Endothelial cell of umbilical vein (primary cell): ENCODE measurements at regions of chr4 and their contacts with region 1.

Region 1: DNA sequence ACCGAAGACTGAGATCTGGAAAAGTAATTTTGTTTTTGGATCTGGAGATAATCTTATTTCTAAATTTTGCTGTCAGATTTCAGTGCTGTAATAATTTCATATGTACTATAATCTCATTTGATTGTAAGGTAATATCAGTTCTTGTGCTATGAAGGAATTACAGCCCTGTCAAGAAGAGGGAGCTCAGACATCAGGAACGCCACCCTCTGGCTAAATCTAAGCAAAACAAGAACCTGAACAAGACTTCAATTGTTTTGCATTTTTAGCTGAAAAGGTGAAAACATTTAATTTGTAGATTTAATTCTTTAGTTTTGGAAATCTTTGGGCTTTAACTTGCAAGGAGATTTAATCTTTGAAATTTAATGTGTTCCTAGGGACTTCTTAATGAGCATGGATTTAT is 525.4 kb upstream of the HS3ST1 start:
- DNase-seq: peak; percentile 79
- H3K4me3 ChIP-seq: no peak overlapping the region
- H3K27ac ChIP-seq: no peak overlapping the region
- H3K4me1 ChIP-seq: no peaks in the 10 kb centered on the region
- H3K27me3 ChIP-seq: no peaks in the 10 kb centered on the region
- CTCF ChIP-seq: peak; percentile 32 to 50
- POLR2A ChIP-seq: no peak

Region 2: DNA sequence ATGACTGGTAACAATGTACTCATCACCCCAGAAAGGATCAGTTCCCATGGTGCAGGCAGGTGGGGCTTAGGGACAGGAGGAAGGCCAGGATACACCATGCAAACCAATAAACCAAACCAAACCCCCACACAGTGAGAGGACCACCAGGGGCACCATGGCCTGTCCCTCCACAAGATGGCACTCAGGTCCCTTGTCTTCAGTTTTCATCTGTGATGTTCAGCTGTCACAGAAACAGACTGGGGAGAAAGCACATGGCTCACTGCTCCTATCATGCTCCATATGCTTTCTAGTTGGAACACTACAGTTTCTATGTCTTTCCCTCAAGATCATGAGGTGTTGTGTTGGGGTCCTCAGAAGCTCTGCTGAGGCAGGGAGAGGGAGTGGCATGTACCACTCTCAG is 535.5 kb before region 1 on chr4:
- CTCF ChIA-PET with region 1: interaction called, 3 read pairs
- POLR2A ChIA-PET with region 1: no interaction called
- dilution Hi-C with region 1: no loop called
- intact Hi-C with region 1: loop called (anchors 1 kb)
- DNase-seq: peak; percentile 21
- H3K4me3 ChIP-seq: no peak overlapping the region
- H3K27ac ChIP-seq: no peak overlapping the region
- H3K4me1 ChIP-seq: no peaks in the 10 kb centered on the region
- H3K27me3 ChIP-seq: no peaks in the 10 kb centered on the region
- CTCF ChIP-seq: peak; percentile 40 to 55
- POLR2A ChIP-seq: no peak

Region 3: GRCh38 chr4:11514779-11515419 is 439.2 kb before region 1 on chr4:
- CTCF ChIA-PET with region 1: no interaction called
- POLR2A ChIA-PET with region 1: no interaction called
- dilution Hi-C with region 1: no loop called
- intact Hi-C with region 1: no loop called
- DNase-seq: peak; percentile 60
- H3K4me3 ChIP-seq: no peak overlapping the region
- H3K27ac ChIP-seq: peak overlapping the region; percentile 2
- H3K4me1 ChIP-seq: peaks cover 8% of the 10 kb centered on the region
- H3K27me3 ChIP-seq: no peaks in the 10 kb centered on the region
- CTCF ChIP-seq: no peak
- POLR2A ChIP-seq: no peak

Region 4: DNA sequence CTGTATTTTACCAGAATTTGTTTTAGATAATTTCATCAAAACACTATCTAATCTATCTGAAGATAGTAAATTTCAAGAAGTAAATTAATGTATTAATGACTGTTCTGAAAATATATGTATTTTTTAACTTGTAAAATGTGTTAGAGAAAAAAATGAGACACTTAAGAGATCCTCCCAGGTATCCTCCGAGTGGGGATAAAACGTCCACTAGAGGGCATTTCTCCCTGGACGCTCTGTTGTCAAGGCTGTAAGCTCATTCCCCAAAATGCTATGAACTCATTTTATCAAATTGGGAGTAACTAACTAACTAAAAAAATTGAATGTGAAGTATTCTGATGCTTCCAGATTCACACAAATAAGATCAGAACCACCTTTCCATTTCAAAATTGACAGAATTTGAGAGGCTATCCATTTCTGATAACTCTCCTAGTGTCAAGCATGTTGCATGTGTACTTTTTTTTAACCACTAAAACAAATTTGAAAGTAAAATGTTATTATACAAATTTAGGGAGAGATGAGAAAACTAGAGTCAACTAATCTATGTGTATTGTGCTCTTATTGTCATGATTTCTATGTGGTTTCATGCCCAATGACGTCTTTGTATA is 188.1 kb before region 1 on chr4:
- CTCF ChIA-PET with region 1: interaction called, 54 read pairs
- POLR2A ChIA-PET with region 1: no interaction called
- dilution Hi-C with region 1: no loop called
- intact Hi-C with region 1: loop called (anchors 1 kb)
- DNase-seq: peak; percentile 75
- H3K4me3 ChIP-seq: no peak overlapping the region
- H3K27ac ChIP-seq: no peak overlapping the region
- H3K4me1 ChIP-seq: no peaks in the 10 kb centered on the region
- H3K27me3 ChIP-seq: no peaks in the 10 kb centered on the region
- CTCF ChIP-seq: peak; percentile 61 to 70
- POLR2A ChIP-seq: no peak

Region 5: GRCh38 chr4:11805842-11806241 is 148.3 kb before region 1 on chr4:
- CTCF ChIA-PET with region 1: interaction called, 55 read pairs
- POLR2A ChIA-PET with region 1: no interaction called
- dilution Hi-C with region 1: no loop called
- intact Hi-C with region 1: loop called (anchors 1 kb)
- DNase-seq: peak; percentile 81
- H3K4me3 ChIP-seq: no peak overlapping the region
- H3K27ac ChIP-seq: peak overlapping the region; percentile 45
- H3K4me1 ChIP-seq: peaks cover 21% of the 10 kb centered on the region
- H3K27me3 ChIP-seq: no peaks in the 10 kb centered on the region
- CTCF ChIP-seq: peak; percentile 58 to 65
- POLR2A ChIP-seq: no peak

Region 6: GRCh38 chr4:11912886-11913285 is 41.2 kb before region 1 on chr4:
- CTCF ChIA-PET with region 1: interaction called, 18 read pairs
- POLR2A ChIA-PET with region 1: no interaction called
- dilution Hi-C with region 1: no loop called
- intact Hi-C with region 1: no loop called
- DNase-seq: peak; percentile 40
- H3K4me3 ChIP-seq: no peak overlapping the region
- H3K27ac ChIP-seq: no peak overlapping the region
- H3K4me1 ChIP-seq: peaks cover 10% of the 10 kb centered on the region
- H3K27me3 ChIP-seq: no peaks in the 10 kb centered on the region
- CTCF ChIP-seq: no peak
- POLR2A ChIP-seq: no peak

Region 7: GRCh38 chr4:11937941-11938340 is 16.2 kb before region 1 on chr4:
- CTCF ChIA-PET with region 1: interaction called, 22 read pairs
- POLR2A ChIA-PET with region 1: interaction called, 3 read pairs
- dilution Hi-C with region 1: no loop called
- intact Hi-C with region 1: no loop called
- DNase-seq: no peak
- H3K4me3 ChIP-seq: no peak overlapping the region
- H3K27ac ChIP-seq: no peak overlapping the region
- H3K4me1 ChIP-seq: no peaks in the 10 kb centered on the region
- H3K27me3 ChIP-seq: no peaks in the 10 kb centered on the region
- CTCF ChIP-seq: no peak
- POLR2A ChIP-seq: no peak

Region 8: DNA sequence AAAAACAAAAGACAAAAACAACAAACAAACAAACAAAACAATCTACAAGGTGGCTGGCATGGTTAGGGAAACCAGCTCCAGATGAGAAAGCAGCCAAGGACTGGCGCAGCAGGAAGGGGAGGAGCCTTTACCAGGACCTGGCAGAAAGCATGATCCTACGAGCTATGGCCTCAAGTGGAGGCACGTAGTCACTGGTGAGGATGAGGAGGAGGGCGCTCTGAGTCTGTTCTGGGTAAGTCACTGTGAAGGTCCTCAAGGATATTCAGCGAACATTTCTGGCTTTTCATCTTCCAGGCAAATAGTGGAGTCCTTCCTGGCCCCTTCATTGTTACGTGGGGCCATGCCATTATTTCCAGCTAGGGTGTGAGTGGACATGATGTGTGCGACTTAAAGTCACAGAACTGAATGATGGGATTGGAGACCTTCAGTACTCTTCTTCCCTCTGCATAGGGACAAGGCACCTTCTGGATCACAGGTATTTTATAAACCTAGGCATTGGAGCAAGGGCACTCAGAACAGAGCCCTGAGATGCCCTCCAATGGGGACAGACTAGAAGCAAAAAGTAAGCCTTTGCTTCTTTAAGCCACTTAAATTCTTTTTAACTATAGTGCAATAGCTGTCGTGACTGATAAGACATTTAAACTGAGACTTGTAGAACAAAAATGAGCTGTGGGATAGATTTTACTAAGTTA is 758.7 kb after region 1 on chr4:
- CTCF ChIA-PET with region 1: no interaction called
- POLR2A ChIA-PET with region 1: no interaction called
- dilution Hi-C with region 1: no loop called
- intact Hi-C with region 1: no loop called
- DNase-seq: no peak
- H3K4me3 ChIP-seq: no peak overlapping the region
- H3K27ac ChIP-seq: no peak overlapping the region
- H3K4me1 ChIP-seq: no peaks in the 10 kb centered on the region
- H3K27me3 ChIP-seq: no peaks in the 10 kb centered on the region
- CTCF ChIP-seq: no peak
- POLR2A ChIP-seq: no peak